Right lobe of liver (tissue), 6 donors: ENCODE measurements at regions of chr11 and their contacts with region 1.

Region 1: GRCh38 chr11:123580557-123581275 is 73.7 kb downstream of the SCN3B start:
- DNase-seq: peak; percentile 73 to 81 (median 75)
- ATAC-seq: peak; percentile 92 to 94 (median 94)
- H3K4me3 ChIP-seq: no peak overlapping the region
- H3K27ac ChIP-seq: no peak overlapping the region
- H3K4me1 ChIP-seq: no peaks in the 10 kb centered on the region
- H3K27me3 ChIP-seq: no peaks in the 10 kb centered on the region
- CTCF ChIP-seq: peak; percentile 84 to 95 (median 92)
- POLR2A ChIP-seq: no peak

Region 2: GRCh38 chr11:123457187-123457770 is 123.4 kb before region 1 on chr11:
- intact Hi-C with region 1: no loop called
- DNase-seq: no peak
- ATAC-seq: peak; percentile 36 to 77 (median 73)
- H3K4me3 ChIP-seq: no peak overlapping the region
- H3K27ac ChIP-seq: no peak overlapping the region
- H3K4me1 ChIP-seq: no peaks in the 10 kb centered on the region
- H3K27me3 ChIP-seq: no peaks in the 10 kb centered on the region
- CTCF ChIP-seq: no peak
- POLR2A ChIP-seq: no peak

Region 3: DNA sequence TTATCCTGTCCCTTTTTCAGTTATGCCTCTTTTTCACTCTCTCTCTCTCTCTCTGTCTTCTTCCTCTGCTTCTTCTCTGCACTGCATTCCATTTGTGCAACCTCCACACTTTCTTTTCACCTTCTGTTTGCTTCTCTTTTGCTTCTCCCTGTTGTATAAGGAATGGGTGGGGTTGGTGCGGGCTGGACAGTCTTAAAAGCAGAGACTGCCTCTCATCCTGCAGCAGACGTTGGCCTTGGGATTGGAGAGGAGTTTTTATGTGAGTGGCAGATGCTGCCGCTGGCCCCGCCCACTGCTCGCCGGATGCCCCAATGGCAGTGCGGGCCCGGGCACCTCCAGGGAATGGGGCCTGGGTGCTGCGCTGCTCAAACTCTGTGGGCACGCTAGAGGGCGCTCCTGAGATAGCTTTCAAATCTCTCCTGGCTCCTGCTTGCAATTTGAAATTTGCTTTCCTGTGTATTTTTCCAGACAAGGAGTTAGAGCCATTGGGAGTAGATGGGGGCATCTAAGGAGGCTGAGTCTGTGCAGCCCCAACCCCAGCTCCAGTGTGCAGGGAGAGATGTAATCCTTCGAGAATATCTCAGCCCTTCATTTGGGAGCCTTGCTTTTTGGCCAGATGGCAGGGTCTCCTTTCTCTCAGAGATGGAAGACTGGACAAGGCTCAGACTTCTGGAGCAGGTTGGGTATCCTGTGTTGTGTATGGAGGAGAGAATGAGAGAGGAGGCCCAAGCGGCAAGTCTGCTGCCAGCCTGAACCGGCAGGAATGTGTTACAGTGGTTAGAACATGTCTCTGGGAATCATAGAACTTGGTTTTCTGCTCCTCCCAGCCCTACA is 69.5 kb before region 1 on chr11:
- intact Hi-C with region 1: loop called in 1 of 2 experiments (anchors 10 kb)
- DNase-seq: peak; percentile 71 to 81 (median 77)
- ATAC-seq: peak; percentile 96 to 99 (median 98)
- H3K4me3 ChIP-seq: no peak overlapping the region
- H3K27ac ChIP-seq: no peak overlapping the region
- H3K4me1 ChIP-seq: no peaks in the 10 kb centered on the region
- H3K27me3 ChIP-seq: no peaks in the 10 kb centered on the region
- CTCF ChIP-seq: peak; percentile 64 to 91 (median 87)
- POLR2A ChIP-seq: no peak

Region 4: GRCh38 chr11:123640677-123641494 is 60.2 kb after region 1 on chr11:
- intact Hi-C with region 1: no loop called
- DNase-seq: peak in 1 of 3 donors; percentile 28
- ATAC-seq: peak; percentile 66 to 78 (median 76)
- H3K4me3 ChIP-seq: no peak overlapping the region
- H3K27ac ChIP-seq: no peak overlapping the region
- H3K4me1 ChIP-seq: no peaks in the 10 kb centered on the region
- H3K27me3 ChIP-seq: no peaks in the 10 kb centered on the region
- CTCF ChIP-seq: peak; percentile 31 to 61 (median 56)
- POLR2A ChIP-seq: no peak

Region 5: DNA sequence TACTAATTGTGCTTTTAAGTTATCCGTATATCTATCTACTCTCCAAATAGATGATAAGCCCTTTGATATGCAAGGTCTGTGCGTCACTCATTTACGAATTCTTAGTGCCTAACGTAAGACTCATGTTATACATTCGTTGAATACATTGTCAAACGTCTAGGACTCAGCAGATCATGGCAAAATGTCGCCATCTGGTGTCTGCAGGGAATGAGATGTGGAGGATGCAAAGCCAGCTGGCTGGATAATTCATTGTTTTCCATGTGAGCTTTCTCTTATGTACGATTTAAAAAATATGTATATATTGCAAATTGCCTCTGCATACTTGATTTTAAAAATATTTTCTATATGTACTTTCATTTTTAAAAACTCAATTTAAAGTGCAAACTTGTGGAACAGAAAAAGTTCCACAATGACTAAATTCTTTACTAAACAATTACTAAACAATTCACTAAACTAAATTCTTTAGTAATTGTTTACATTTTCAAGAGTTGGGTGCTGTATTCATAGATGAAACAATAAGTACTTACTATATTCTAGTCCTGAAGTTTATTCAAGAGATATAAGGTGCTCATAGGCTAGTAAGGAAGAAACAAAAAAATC is 127.0 kb after region 1 on chr11:
- intact Hi-C with region 1: loop called (anchors 5 kb)
- DNase-seq: peak in 2 of 3 donors; percentile 35 to 50
- ATAC-seq: peak; percentile 60 to 73 (median 64)
- H3K4me3 ChIP-seq: no peak overlapping the region
- H3K27ac ChIP-seq: no peak overlapping the region
- H3K4me1 ChIP-seq: no peaks in the 10 kb centered on the region
- H3K27me3 ChIP-seq: no peaks in the 10 kb centered on the region
- CTCF ChIP-seq: peak; percentile 46 to 77 (median 66)
- POLR2A ChIP-seq: no peak